Activated CD4-positive, alpha-beta T cell treated with anti-CD3 and anti-CD28 coated beads, Interleukin-2, amount 10 ng/mL, durations not matched to agents 7 days and 5 days (primary cell): ENCODE measurements at regions of chr7 and their contacts with region 1.

Region 1: GRCh38 chr7:38215735-38216670 is 38.0 kb downstream of the STARD3NL start:
- DNase-seq: peak; percentile 83
- H3K4me3 Mint-ChIP-seq: no peak overlapping the region
- H3K27ac Mint-ChIP-seq: peak overlapping the region; percentile 55
- H3K4me1 Mint-ChIP-seq: peaks cover 44% of the 10 kb centered on the region
- H3K27me3 Mint-ChIP-seq: no peaks in the 10 kb centered on the region

Region 2: GRCh38 chr7:38179776-38180226 is 36.2 kb before region 1 on chr7:
- CTCF ChIA-PET with region 1: interaction called, 13 read pairs
- POLR2A ChIA-PET with region 1: no interaction called
- DNase-seq: no peak
- H3K4me3 Mint-ChIP-seq: peak overlapping the region; percentile 91
- H3K27ac Mint-ChIP-seq: no peak overlapping the region
- H3K4me1 Mint-ChIP-seq: peaks cover 34% of the 10 kb centered on the region
- H3K27me3 Mint-ChIP-seq: peaks cover under 1% of the 10 kb centered on the region

Region 3: GRCh38 chr7:38195804-38196595 is 20.0 kb before region 1 on chr7:
- CTCF ChIA-PET with region 1: interaction called, 11 read pairs
- POLR2A ChIA-PET with region 1: no interaction called
- DNase-seq: no peak
- H3K4me3 Mint-ChIP-seq: no peak overlapping the region
- H3K27ac Mint-ChIP-seq: no peak overlapping the region
- H3K4me1 Mint-ChIP-seq: peaks cover 10% of the 10 kb centered on the region
- H3K27me3 Mint-ChIP-seq: no peaks in the 10 kb centered on the region

Region 4: GRCh38 chr7:38232502-38233366 is 16.7 kb after region 1 on chr7:
- CTCF ChIA-PET with region 1: interaction called, 20 read pairs
- POLR2A ChIA-PET with region 1: no interaction called
- DNase-seq: peak; percentile 81
- H3K4me3 Mint-ChIP-seq: peak overlapping the region; percentile 55
- H3K27ac Mint-ChIP-seq: peak overlapping the region; percentile 93
- H3K4me1 Mint-ChIP-seq: peaks cover 86% of the 10 kb centered on the region
- H3K27me3 Mint-ChIP-seq: peaks cover 1% of the 10 kb centered on the region

Region 5: GRCh38 chr7:38274486-38274885 is 58.5 kb after region 1 on chr7:
- CTCF ChIA-PET with region 1: no interaction called
- POLR2A ChIA-PET with region 1: no interaction called
- DNase-seq: no peak
- H3K4me3 Mint-ChIP-seq: no peak overlapping the region
- H3K27ac Mint-ChIP-seq: no peak overlapping the region
- H3K4me1 Mint-ChIP-seq: no peaks in the 10 kb centered on the region
- H3K27me3 Mint-ChIP-seq: no peaks in the 10 kb centered on the region

Region 6: DNA sequence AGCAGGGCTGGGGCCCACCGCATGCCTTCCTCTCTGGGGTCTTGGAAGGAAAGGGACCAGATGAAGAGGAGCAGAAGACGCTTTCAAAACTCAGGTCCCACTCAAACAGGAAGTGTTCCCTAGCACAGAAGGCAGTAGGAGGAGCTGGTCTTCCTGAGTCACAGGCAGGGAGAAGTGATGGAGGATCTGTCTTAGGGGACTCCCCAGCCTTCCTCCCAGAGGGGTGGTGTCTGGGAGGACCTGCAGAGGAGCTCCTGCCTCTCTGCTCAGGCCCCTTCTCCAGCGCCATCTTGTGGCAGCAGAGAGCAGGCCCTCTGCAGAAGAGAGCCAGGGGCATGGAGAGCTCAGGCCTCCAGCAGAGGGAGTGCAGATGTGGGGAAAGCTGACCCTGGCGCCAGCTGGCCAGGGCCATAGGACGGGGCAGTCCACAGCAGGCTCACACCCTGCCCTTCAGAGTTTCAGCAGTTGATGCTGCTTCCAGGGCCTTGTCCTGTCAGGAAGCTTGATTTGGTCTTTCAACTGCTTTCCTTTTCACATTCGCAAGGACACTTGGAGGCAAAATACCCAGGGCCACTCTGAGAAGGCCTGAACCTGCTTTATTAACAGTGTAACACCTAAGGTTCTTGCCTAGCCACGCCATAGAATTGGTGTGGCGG is 119.6 kb after region 1 on chr7:
- CTCF ChIA-PET with region 1: interaction called, 55 read pairs
- POLR2A ChIA-PET with region 1: interaction called, 4 read pairs
- DNase-seq: peak; percentile 83
- H3K4me3 Mint-ChIP-seq: peak overlapping the region; percentile 69
- H3K27ac Mint-ChIP-seq: peak overlapping the region; percentile 76
- H3K4me1 Mint-ChIP-seq: peaks cover 55% of the 10 kb centered on the region
- H3K27me3 Mint-ChIP-seq: no peaks in the 10 kb centered on the region

Region 7: DNA sequence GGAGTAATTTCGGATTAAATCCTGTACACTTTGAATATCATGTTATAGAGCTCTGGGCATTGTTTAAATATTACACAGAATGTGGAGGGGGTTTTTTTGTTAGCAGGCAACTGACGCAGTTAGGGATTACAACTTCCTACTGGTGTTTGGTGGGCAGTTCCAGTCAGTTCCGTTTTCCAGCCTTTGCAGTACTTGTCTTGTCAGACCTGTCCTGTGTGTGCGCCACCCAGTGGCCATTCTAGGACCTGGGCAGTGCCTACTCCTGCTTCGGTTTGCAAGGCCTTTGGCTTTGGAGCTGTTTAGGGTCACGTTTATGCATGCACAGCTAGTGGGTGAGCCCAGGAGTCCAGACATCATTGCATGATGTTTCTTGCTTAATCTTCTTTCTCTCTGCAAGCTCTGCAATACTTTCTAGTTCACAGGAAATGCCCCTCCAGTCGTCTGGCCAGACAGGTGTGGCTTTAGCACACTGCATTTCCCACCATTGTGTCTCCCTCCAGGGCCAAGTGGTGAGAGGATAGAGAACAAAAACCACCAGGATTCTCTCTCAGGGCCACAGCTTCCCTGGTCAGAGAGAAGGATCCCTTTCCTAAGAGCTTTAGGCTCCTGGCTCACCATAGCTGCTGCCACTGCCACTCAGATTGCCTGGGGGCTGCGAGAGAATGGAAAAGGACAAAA is 154.0 kb after region 1 on chr7:
- CTCF ChIA-PET with region 1: interaction called, 65 read pairs
- POLR2A ChIA-PET with region 1: no interaction called
- DNase-seq: peak; percentile 83
- H3K4me3 Mint-ChIP-seq: no peak overlapping the region
- H3K27ac Mint-ChIP-seq: peak overlapping the region; percentile 9
- H3K4me1 Mint-ChIP-seq: peaks cover 56% of the 10 kb centered on the region
- H3K27me3 Mint-ChIP-seq: no peaks in the 10 kb centered on the region